ENCODE measurements at regions of chr2 and their contacts with region 1.

Region 1: GRCh38 chr2:157302492-157303099 is 23.0 kb downstream of the ERMN start:
- DNase-seq: peak; percentile 53
- ATAC-seq: peak; percentile 78
- H3K4me3 Mint-ChIP-seq: no peak overlapping the region
- H3K27ac Mint-ChIP-seq: no peak overlapping the region
- H3K4me1 Mint-ChIP-seq: peaks cover 23% of the 10 kb centered on the region
- H3K27me3 Mint-ChIP-seq: peaks cover 20% of the 10 kb centered on the region

Region 2: GRCh38 chr2:156986337-156986988 is 316.1 kb before region 1 on chr2:
- CTCF ChIA-PET with region 1: no interaction called
- POLR2A ChIA-PET with region 1: no interaction called
- DNase-seq: no peak
- ATAC-seq: no peak
- H3K4me3 Mint-ChIP-seq: no peak overlapping the region
- H3K27ac Mint-ChIP-seq: no peak overlapping the region
- H3K4me1 Mint-ChIP-seq: no peaks in the 10 kb centered on the region
- H3K27me3 Mint-ChIP-seq: no peaks in the 10 kb centered on the region

Region 3: GRCh38 chr2:157404363-157404762 is 101.8 kb after region 1 on chr2:
- CTCF ChIA-PET with region 1: interaction called, 12 read pairs
- POLR2A ChIA-PET with region 1: no interaction called
- DNase-seq: peak; percentile 78
- ATAC-seq: peak; percentile 97
- H3K4me3 Mint-ChIP-seq: peak overlapping the region; percentile 15
- H3K27ac Mint-ChIP-seq: peak overlapping the region; percentile 84
- H3K4me1 Mint-ChIP-seq: peaks cover 70% of the 10 kb centered on the region
- H3K27me3 Mint-ChIP-seq: no peaks in the 10 kb centered on the region

Region 4: GRCh38 chr2:157460384-157460837 is 157.8 kb after region 1 on chr2:
- CTCF ChIA-PET with region 1: interaction called, 11 read pairs
- POLR2A ChIA-PET with region 1: no interaction called
- DNase-seq: no peak
- ATAC-seq: no peak
- H3K4me3 Mint-ChIP-seq: no peak overlapping the region
- H3K27ac Mint-ChIP-seq: peak overlapping the region; percentile 36
- H3K4me1 Mint-ChIP-seq: peaks cover 89% of the 10 kb centered on the region
- H3K27me3 Mint-ChIP-seq: no peaks in the 10 kb centered on the region

Region 5: GRCh38 chr2:157492189-157492773 is 189.7 kb after region 1 on chr2:
- CTCF ChIA-PET with region 1: interaction called, 138 read pairs
- POLR2A ChIA-PET with region 1: no interaction called
- DNase-seq: peak; percentile 85
- ATAC-seq: peak; percentile 85
- H3K4me3 Mint-ChIP-seq: no peak overlapping the region
- H3K27ac Mint-ChIP-seq: no peak overlapping the region
- H3K4me1 Mint-ChIP-seq: peaks cover 66% of the 10 kb centered on the region
- H3K27me3 Mint-ChIP-seq: no peaks in the 10 kb centered on the region

Region 6: GRCh38 chr2:157628477-157629415 is 326.1 kb after region 1 on chr2 and contains the start of gene ACVR1C:
- CTCF ChIA-PET with region 1: interaction called, 20 read pairs
- POLR2A ChIA-PET with region 1: no interaction called
- DNase-seq: peak; percentile 75
- ATAC-seq: peak; percentile 95
- H3K4me3 Mint-ChIP-seq: peak within 1 kb of the TSS; percentile 81
- H3K27ac Mint-ChIP-seq: no peak within 1 kb of the TSS
- H3K4me1 Mint-ChIP-seq: peaks cover 26% of the 10 kb centered on the region
- H3K27me3 Mint-ChIP-seq: peaks cover 15% of the 10 kb centered on the region
- total RNA-seq, gene ACVR1C: 0.63 to 0.73 TPM

Region 7: GRCh38 chr2:158024288-158024898 is 721.8 kb after region 1 on chr2:
- CTCF ChIA-PET with region 1: interaction called, 17 read pairs
- POLR2A ChIA-PET with region 1: no interaction called
- DNase-seq: peak; percentile 63
- ATAC-seq: peak; percentile 64
- H3K4me3 Mint-ChIP-seq: no peak overlapping the region
- H3K27ac Mint-ChIP-seq: no peak overlapping the region
- H3K4me1 Mint-ChIP-seq: peaks cover 4% of the 10 kb centered on the region
- H3K27me3 Mint-ChIP-seq: peaks cover 3% of the 10 kb centered on the region

Measured in activated CD8-positive, alpha-beta T cell treated with anti-CD3 and anti-CD28 coated beads, Interleukin-2, amount 10 ng/mL, durations not matched to agents 7 days and 5 days (primary cell).